ENCODE measurements at regions of chr5 and their contacts with region 1.

Region 1: GRCh38 chr5:88539693-88540365 is 271.2 kb upstream of the TMEM161B start:
- DNase-seq: peak in 12 of 42 donors; percentile 5 to 52 (median 19)

Region 2: GRCh38 chr5:88391116-88391515 is 148.7 kb before region 1 on chr5:
- intact Hi-C with region 1: loop called (anchors 10 kb)
- DNase-seq: peak in 35 of 42 donors; percentile 15 to 81 (median 54)

Measured in head of caudate nucleus (tissue), 42 donors.